Activated CD4-positive, alpha-beta T cell treated with anti-CD3 and anti-CD28 coated beads for 36 hours (primary cell): ENCODE measurements at regions of chr15 and their contacts with region 1.

Region 1: DNA sequence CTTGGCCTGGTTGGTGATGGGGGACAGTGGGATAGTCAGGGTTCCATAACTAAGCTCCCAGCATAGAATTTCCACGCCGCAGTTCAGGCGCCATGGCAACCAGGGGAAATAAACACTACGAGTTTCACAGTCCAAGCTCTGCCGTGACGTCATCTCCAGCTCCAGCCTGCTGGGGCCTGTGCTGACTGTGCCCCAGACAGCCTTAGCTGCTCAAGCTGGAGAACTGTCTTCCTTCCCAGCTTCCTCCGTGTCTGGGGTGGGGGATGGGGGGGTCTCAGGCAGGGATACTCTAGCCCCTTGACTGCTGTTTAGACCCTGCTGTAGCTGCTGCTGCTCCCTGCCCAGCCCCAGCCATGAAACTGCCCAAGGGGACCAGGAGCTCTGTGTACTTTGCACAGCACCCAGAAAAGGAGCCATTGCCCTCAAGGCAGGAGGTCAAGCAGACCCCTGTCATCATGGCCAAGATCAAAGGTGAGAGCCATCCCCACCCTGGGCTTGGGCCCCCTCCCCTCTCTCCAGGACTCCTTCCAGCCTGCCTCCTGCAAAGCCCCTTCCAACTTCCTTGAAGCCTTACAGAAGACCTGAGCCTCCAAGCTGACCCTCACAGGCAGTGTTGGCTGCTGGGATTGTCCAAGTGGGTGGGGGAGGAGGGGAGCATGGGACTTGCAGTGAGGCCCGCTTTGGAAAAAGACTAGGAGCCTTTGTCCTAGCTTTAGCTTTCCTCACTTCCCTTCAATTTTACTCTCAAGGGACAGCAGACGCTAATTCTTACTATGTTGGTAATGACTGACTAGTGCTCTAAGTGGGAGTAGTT is 11.4 kb upstream of the CSPG4 start:
- DNase-seq: peak; percentile 73
- ATAC-seq: peak; percentile 53
- H3K4me3 Mint-ChIP-seq: no peak overlapping the region
- H3K27ac Mint-ChIP-seq: no peak overlapping the region
- H3K4me1 Mint-ChIP-seq: peaks cover 8% of the 10 kb centered on the region
- H3K27me3 Mint-ChIP-seq: peaks cover 9% of the 10 kb centered on the region

Region 2: GRCh38 chr15:75785771-75786574 is 61.9 kb after region 1 on chr15:
- CTCF ChIA-PET with region 1: no interaction called
- POLR2A ChIA-PET with region 1: no interaction called
- intact Hi-C with region 1: no loop called
- DNase-seq: no peak
- ATAC-seq: no peak
- H3K4me3 Mint-ChIP-seq: no peak overlapping the region
- H3K27ac Mint-ChIP-seq: no peak overlapping the region
- H3K4me1 Mint-ChIP-seq: no peaks in the 10 kb centered on the region
- H3K27me3 Mint-ChIP-seq: peaks cover 2% of the 10 kb centered on the region

Region 3: GRCh38 chr15:75801859-75802593 is 78.0 kb after region 1 on chr15:
- CTCF ChIA-PET with region 1: interaction called, 46 read pairs
- POLR2A ChIA-PET with region 1: no interaction called
- intact Hi-C with region 1: loop called (anchors 1 kb)
- DNase-seq: peak; percentile 91
- ATAC-seq: peak; percentile 98
- H3K4me3 Mint-ChIP-seq: peak overlapping the region; percentile 22
- H3K27ac Mint-ChIP-seq: no peak overlapping the region
- H3K4me1 Mint-ChIP-seq: peaks cover 3% of the 10 kb centered on the region
- H3K27me3 Mint-ChIP-seq: peaks cover 26% of the 10 kb centered on the region